Gastrocnemius medialis (tissue), 4 donors: ENCODE measurements at regions of chr1 and their contacts with region 1.

Region 1: GRCh38 chr1:231421993-231422764 is at the start of gene EGLN1:
- DNase-seq: peak; percentile 78 to 82
- ATAC-seq: peak; percentile 48 to 67
- H3K4me3 ChIP-seq: peak within 1 kb of the TSS; percentile 75 to 87 (median 82)
- H3K27ac ChIP-seq: peak within 1 kb of the TSS; percentile 97 to 98 (median 98)
- H3K4me1 ChIP-seq: peaks cover 38 to 40% of the 10 kb centered on the region in 2 donors
- H3K27me3 ChIP-seq: no peaks in the 10 kb centered on the region
- CTCF ChIP-seq: peak in 4 of 5 experiments; percentile 7 to 31 (median 18)
- POLR2A ChIP-seq: peak; percentile 93 to 96
- total RNA-seq, gene EGLN1: 500 to 862 (median 706) TPM

Region 2: GRCh38 chr1:231240883-231241735 is 181.1 kb before region 1 on chr1 and contains the start of gene GNPAT:
- in situ Hi-C with region 1: no loop called
- intact Hi-C with region 1: loop called (anchors 10 kb)
- DNase-seq: peak; percentile 74 to 80
- ATAC-seq: peak; percentile 76 to 81
- H3K4me3 ChIP-seq: peak within 1 kb of the TSS; percentile 76 to 93 (median 84)
- H3K27ac ChIP-seq: peak within 1 kb of the TSS; percentile 86 to 91 (median 90)
- H3K4me1 ChIP-seq: peaks cover 46 to 49% of the 10 kb centered on the region in 2 donors
- H3K27me3 ChIP-seq: no peaks in the 10 kb centered on the region
- CTCF ChIP-seq: no peak
- POLR2A ChIP-seq: peak; percentile 85 to 91
- total RNA-seq, gene GNPAT: 95.1 to 128 (median 104) TPM

Region 3: DNA sequence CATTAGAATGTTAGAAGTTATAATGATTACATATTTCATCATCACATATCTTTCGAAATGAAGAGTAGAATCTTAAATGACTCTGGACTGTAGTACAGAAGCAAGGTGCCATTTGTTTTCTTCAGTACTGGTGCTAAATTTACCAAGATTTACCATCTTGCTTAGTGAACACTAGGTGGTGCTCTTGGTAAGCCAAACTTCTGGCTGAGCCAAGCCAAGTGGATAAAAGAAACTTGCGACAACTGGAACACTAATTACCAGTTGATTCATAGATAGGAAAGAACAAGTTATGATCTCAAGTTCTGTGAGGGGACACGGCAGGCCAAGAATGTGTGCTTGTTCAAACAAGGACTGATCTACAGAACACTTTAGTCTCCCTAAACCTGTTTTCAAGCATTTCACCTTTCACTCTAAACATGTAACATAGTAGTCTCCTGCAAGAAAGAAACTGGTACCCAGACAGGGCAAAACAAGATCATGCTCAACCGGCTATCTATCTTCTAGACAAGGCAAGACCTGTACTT is 64.3 kb before region 1 on chr1:
- in situ Hi-C with region 1: loop called in 1 of 4 experiments (anchors 10 kb)
- intact Hi-C with region 1: loop called (anchors 2 kb)
- DNase-seq: peak; percentile 63 to 68
- ATAC-seq: peak; percentile 75 to 78
- H3K4me3 ChIP-seq: peak overlapping the region in 1 of 4 donors; percentile 10
- H3K27ac ChIP-seq: peak overlapping the region; percentile 76 to 87 (median 82)
- H3K4me1 ChIP-seq: peaks cover 28 to 34% of the 10 kb centered on the region in 2 donors
- H3K27me3 ChIP-seq: no peaks in the 10 kb centered on the region
- CTCF ChIP-seq: peak; percentile 75 to 85 (median 81)
- POLR2A ChIP-seq: peak in 1 of 2 donors; percentile 43

Region 4: GRCh38 chr1:231407547-231408396 is 14.4 kb before region 1 on chr1:
- in situ Hi-C with region 1: no loop called
- intact Hi-C with region 1: loop called (anchors 1 kb)
- DNase-seq: no peak
- ATAC-seq: peak in 1 of 2 donors; percentile 25
- H3K4me3 ChIP-seq: peak overlapping the region; percentile 29 to 41 (median 37)
- H3K27ac ChIP-seq: peak overlapping the region; percentile 97 to 98 (median 98)
- H3K4me1 ChIP-seq: peaks cover 77 to 86% of the 10 kb centered on the region in 2 donors
- H3K27me3 ChIP-seq: no peaks in the 10 kb centered on the region
- CTCF ChIP-seq: no peak
- POLR2A ChIP-seq: peak in 1 of 2 donors; percentile 18

Region 5: GRCh38 chr1:231528172-231529029 is 106.2 kb after region 1 on chr1 and contains the start of gene TSNAX:
- in situ Hi-C with region 1: loop called in 2 of 4 experiments (anchors 10 kb)
- intact Hi-C with region 1: loop called (anchors 2 kb)
- DNase-seq: peak; percentile 84 to 90
- ATAC-seq: peak; percentile 90 to 96
- H3K4me3 ChIP-seq: peak within 1 kb of the TSS; percentile 70 to 93 (median 80)
- H3K27ac ChIP-seq: peak within 1 kb of the TSS; percentile 94 to 99 (median 96)
- H3K4me1 ChIP-seq: peaks cover 18 to 49% of the 10 kb centered on the region in 2 donors
- H3K27me3 ChIP-seq: no peaks in the 10 kb centered on the region
- CTCF ChIP-seq: no peak
- POLR2A ChIP-seq: peak; percentile 95
- total RNA-seq, gene TSNAX: 47.8 to 84.2 (median 77.8) TPM

Region 6: DNA sequence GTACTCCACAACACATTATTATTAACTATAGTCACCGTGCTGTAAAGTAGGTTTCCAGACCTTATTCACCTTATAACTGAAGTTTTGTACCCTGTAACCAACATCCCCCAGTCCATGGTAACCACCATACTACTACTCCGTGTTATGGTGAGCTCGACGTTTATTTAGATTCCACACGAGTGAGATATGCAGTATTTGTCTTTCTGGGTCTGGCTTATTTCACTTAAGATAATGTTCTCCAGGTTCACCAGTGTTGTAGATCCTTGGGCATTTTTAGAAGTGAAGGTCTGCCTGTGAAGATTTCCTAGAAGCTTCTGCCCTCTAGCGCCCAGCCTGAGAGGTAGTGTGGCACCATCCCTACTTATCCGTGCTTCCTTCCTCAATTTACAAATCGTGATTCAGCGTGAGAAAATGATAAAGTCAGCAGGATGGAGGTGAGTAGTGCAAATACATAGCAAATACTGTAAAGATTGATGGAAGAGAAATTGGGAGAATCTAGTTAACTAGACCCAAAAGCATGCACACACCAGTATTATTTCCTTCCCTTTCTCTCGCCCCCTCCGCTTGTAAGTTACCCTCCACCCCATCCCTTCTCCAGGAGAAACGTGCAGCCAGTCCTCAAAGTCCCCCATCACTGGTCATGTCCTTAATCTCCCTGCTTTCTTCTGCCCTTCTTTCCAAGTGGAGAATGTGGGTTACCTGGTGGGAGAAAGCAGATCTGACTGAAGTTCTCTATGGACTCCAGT is 168.4 kb after region 1 on chr1:
- in situ Hi-C with region 1: no loop called
- intact Hi-C with region 1: loop called (anchors 2 kb)
- DNase-seq: peak in 1 of 2 donors; percentile 32
- ATAC-seq: peak; percentile 82 to 92
- H3K4me3 ChIP-seq: no peak overlapping the region
- H3K27ac ChIP-seq: peak overlapping the region in 3 of 4 donors; percentile 20 to 42 (median 36)
- H3K4me1 ChIP-seq: peaks cover 3 to 12% of the 10 kb centered on the region in 2 donors
- H3K27me3 ChIP-seq: no peaks in the 10 kb centered on the region
- CTCF ChIP-seq: peak; percentile 61 to 76 (median 72)
- POLR2A ChIP-seq: no peak